ENCODE measurements at regions of chr17 and their contacts with region 1.

Region 1: DNA sequence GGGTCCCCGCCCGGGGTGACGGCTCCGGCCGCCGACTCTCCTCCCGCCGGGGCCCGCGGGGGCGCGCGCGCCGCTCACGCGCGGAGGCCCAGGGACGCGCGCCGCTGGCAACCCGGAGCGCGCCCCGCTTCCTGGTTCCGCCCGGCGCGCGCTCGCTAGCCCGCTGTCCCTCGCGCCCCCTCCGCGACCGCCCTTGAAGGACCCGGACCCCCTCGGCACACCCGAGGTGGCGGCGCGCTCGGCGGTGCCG is at the start of gene STAT5B:
- DNase-seq: peak; percentile 82 to 88
- ATAC-seq: peak; percentile 77 to 92 (median 83)
- H3K4me3 ChIP-seq: peak within 1 kb of the TSS; percentile 73
- H3K4me3 Mint-ChIP-seq: peak within 1 kb of the TSS; percentile 98
- H3K27ac ChIP-seq: peak within 1 kb of the TSS; percentile 74
- H3K27ac Mint-ChIP-seq: peak within 1 kb of the TSS; percentile 88 to 92
- H3K4me1 ChIP-seq: peaks cover 19% of the 10 kb centered on the region
- H3K4me1 Mint-ChIP-seq: peaks cover 52 to 56% of the 10 kb centered on the region in 2 donors
- H3K27me3 ChIP-seq: no peaks in the 10 kb centered on the region
- H3K27me3 Mint-ChIP-seq: no peaks in the 10 kb centered on the region
- CTCF ChIP-seq: no peak
- total RNA-seq, gene STAT5B: 79.9 to 112 (median 103) TPM

Region 2: GRCh38 chr17:42221937-42222745 is 54.1 kb before region 1 on chr17:
- intact Hi-C with region 1: loop called (anchors 10 kb)
- DNase-seq: peak; percentile 37 to 85
- ATAC-seq: peak; percentile 83 to 97 (median 84)
- H3K4me3 ChIP-seq: no peak overlapping the region
- H3K4me3 Mint-ChIP-seq: no peak overlapping the region
- H3K27ac ChIP-seq: no peak overlapping the region
- H3K27ac Mint-ChIP-seq: peak overlapping the region in 1 of 2 donors; percentile 76
- H3K4me1 ChIP-seq: no peaks in the 10 kb centered on the region
- H3K4me1 Mint-ChIP-seq: peaks cover 0 to 8% of the 10 kb centered on the region in 2 donors
- H3K27me3 ChIP-seq: no peaks in the 10 kb centered on the region
- H3K27me3 Mint-ChIP-seq: no peaks in the 10 kb centered on the region
- CTCF ChIP-seq: peak; percentile 42

Region 3: GRCh38 chr17:42248351-42249179 is 27.7 kb before region 1 on chr17:
- intact Hi-C with region 1: loop called (anchors 2 kb)
- DNase-seq: peak; percentile 69 to 95
- ATAC-seq: peak; percentile 93 to 98 (median 96)
- H3K4me3 ChIP-seq: peak overlapping the region; percentile 28
- H3K4me3 Mint-ChIP-seq: peak overlapping the region; percentile 93
- H3K27ac ChIP-seq: peak overlapping the region; percentile 88
- H3K27ac Mint-ChIP-seq: peak overlapping the region; percentile 97 to 100
- H3K4me1 ChIP-seq: peaks cover 32% of the 10 kb centered on the region
- H3K4me1 Mint-ChIP-seq: peaks cover 39 to 48% of the 10 kb centered on the region in 2 donors
- H3K27me3 ChIP-seq: no peaks in the 10 kb centered on the region
- H3K27me3 Mint-ChIP-seq: no peaks in the 10 kb centered on the region
- CTCF ChIP-seq: no peak

Measured in natural killer cell (primary cell).